ENCODE measurements at regions of chr1 and their contacts with region 1.

Region 1: GRCh38 chr1:110053557-110054428 is 16.7 kb downstream of the ALX3 start:
- DNase-seq: peak; percentile 86
- ATAC-seq: peak; percentile 94
- H3K4me3 Mint-ChIP-seq: no peak overlapping the region
- H3K27ac Mint-ChIP-seq: no peak overlapping the region; the same call in 1 of the 2 replicates
- H3K4me1 Mint-ChIP-seq: no peaks in the 10 kb centered on the region
- H3K27me3 Mint-ChIP-seq: no peaks in the 10 kb centered on the region
- CTCF ChIP-seq: peak; percentile 95

Region 2: DNA sequence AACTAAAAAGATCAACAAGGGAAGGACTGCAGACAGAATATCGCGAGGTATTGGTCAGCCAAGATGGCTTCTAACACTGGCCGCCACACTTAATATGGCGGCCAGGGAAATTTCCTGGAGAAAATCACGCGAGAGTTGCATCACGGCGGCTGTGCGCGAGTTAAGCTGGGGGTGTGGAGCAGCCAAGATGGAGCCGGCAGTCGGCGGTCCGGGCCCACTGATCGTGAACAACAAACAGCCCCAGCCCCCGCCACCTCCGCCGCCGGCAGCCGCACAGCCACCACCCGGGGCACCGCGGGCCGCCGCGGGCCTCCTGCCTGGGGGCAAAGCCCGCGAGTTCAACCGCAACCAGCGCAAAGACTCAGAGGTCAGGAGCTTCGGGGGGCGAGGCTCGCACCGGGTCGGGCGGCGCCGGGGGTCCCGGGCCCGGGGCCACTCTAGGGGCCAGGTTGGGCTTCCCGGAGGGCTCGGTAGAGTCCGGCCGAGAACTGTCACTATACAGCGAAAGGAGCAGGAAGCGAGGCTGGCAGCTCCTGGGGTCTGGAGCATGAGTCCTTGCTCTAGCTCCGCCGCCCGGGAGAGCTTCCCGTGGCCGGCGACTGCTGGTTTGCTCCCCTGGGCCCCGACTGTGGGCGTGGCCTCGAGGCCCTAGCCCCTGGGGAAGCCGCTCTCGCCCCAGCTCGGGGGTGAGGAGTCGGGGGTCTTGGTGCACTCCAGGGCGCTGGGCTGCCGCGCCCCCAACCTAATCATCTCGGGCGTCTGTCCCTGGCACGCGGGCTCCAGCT is 19.1 kb before region 1 on chr1 and contains the start of gene STRIP1:
- CTCF ChIA-PET with region 1: interaction called, 42 read pairs
- POLR2A ChIA-PET with region 1: interaction called, 4 read pairs
- DNase-seq: peak; percentile 88
- ATAC-seq: peak; percentile 83
- H3K4me3 Mint-ChIP-seq: peak within 1 kb of the TSS; percentile 92
- H3K27ac Mint-ChIP-seq: peak within 1 kb of the TSS; percentile 95
- H3K4me1 Mint-ChIP-seq: peaks cover 33% of the 10 kb centered on the region
- H3K27me3 Mint-ChIP-seq: no peaks in the 10 kb centered on the region
- CTCF ChIP-seq: no peak
- total RNA-seq, gene STRIP1: 36.8 to 42.8 TPM (median 38.2 TPM) in 3 replicates

Region 3: GRCh38 chr1:110067893-110068645 is 14.3 kb after region 1 on chr1:
- CTCF ChIA-PET with region 1: interaction called, 19 read pairs
- POLR2A ChIA-PET with region 1: no interaction called
- DNase-seq: peak; percentile 61
- ATAC-seq: peak; percentile 34
- H3K4me3 Mint-ChIP-seq: peak overlapping the region; percentile 67
- H3K27ac Mint-ChIP-seq: no peak overlapping the region
- H3K4me1 Mint-ChIP-seq: peaks cover 15% of the 10 kb centered on the region
- H3K27me3 Mint-ChIP-seq: peaks cover 87% of the 10 kb centered on the region
- CTCF ChIP-seq: no peak

Region 4: GRCh38 chr1:110106013-110106941 is 52.5 kb after region 1 on chr1:
- CTCF ChIA-PET with region 1: interaction called, 87 read pairs
- POLR2A ChIA-PET with region 1: no interaction called
- DNase-seq: peak; percentile 83
- ATAC-seq: peak; percentile 97
- H3K4me3 Mint-ChIP-seq: no peak overlapping the region
- H3K27ac Mint-ChIP-seq: no peak overlapping the region
- H3K4me1 Mint-ChIP-seq: no peaks in the 10 kb centered on the region
- H3K27me3 Mint-ChIP-seq: no peaks in the 10 kb centered on the region
- CTCF ChIP-seq: peak; percentile 81

Region 5: GRCh38 chr1:110118636-110119615 is 65.1 kb after region 1 on chr1:
- CTCF ChIA-PET with region 1: interaction called, 13 read pairs
- POLR2A ChIA-PET with region 1: no interaction called
- DNase-seq: no peak
- ATAC-seq: no peak
- H3K4me3 Mint-ChIP-seq: no peak overlapping the region
- H3K27ac Mint-ChIP-seq: no peak overlapping the region
- H3K4me1 Mint-ChIP-seq: 0 out of 2 replicates have a peak, but pooled peaks cover 4% of the 10 kb centered on the region
- H3K27me3 Mint-ChIP-seq: peaks cover 15% of the 10 kb centered on the region
- CTCF ChIP-seq: no peak

Region 6: DNA sequence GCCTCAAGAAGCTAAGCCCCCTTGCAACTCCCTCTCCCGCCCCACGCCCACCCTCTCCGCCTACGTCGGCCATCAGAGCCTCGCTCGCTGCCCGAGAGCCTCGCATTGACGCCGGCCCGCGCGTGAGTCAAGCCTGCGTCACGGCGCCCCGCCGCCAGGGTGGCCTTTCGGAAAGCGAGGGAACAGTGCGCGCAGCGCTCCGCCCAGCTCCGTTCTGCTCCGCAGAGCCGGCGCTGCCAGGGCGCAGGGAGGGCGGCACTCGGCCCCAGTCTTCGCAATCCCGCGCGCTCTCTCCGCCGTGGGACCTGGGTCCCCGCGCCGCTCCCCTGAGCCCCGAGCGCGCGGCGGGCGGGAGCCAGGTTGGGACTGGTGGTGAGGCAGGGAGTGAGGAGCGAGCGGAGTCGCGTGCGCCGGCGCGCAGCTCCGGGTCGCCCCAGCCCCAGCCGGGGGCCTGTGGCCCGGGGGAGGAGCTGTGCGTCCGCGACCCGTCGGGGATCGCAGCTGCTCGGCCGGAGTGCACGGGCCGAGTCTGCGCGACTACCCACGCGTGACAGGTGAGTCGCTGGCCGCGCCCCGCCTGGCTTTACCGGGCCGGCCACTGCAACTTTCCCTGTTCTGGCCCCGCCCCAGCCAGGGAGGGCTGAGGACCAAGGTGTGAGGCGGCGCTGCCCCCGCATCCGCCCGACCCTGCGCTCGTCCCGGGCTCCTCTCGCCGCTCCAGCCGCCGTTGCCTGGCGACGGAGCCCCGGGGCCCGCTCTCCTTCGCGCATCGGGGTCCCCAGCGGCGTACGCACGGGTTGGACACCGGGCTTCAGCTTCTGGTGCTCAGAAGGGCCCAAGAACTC is 96.8 kb after region 1 on chr1 and contains the start of gene SLC6A17:
- CTCF ChIA-PET with region 1: interaction called, 11 read pairs
- POLR2A ChIA-PET with region 1: no interaction called
- DNase-seq: peak; percentile 63
- ATAC-seq: peak; percentile 76
- H3K4me3 Mint-ChIP-seq: peak within 1 kb of the TSS; percentile 60
- H3K27ac Mint-ChIP-seq: no peak within 1 kb of the TSS
- H3K4me1 Mint-ChIP-seq: peaks cover 6% of the 10 kb centered on the region
- H3K27me3 Mint-ChIP-seq: peaks cover 47% of the 10 kb centered on the region
- CTCF ChIP-seq: no peak
- total RNA-seq, gene SLC6A17: 0.09 to 0.24 TPM (median 0.16 TPM) in 3 replicates